Left ventricle myocardium superior (tissue), 1 donor: ENCODE measurements at regions of chr3 and their contacts with region 1.

Region 1: DNA sequence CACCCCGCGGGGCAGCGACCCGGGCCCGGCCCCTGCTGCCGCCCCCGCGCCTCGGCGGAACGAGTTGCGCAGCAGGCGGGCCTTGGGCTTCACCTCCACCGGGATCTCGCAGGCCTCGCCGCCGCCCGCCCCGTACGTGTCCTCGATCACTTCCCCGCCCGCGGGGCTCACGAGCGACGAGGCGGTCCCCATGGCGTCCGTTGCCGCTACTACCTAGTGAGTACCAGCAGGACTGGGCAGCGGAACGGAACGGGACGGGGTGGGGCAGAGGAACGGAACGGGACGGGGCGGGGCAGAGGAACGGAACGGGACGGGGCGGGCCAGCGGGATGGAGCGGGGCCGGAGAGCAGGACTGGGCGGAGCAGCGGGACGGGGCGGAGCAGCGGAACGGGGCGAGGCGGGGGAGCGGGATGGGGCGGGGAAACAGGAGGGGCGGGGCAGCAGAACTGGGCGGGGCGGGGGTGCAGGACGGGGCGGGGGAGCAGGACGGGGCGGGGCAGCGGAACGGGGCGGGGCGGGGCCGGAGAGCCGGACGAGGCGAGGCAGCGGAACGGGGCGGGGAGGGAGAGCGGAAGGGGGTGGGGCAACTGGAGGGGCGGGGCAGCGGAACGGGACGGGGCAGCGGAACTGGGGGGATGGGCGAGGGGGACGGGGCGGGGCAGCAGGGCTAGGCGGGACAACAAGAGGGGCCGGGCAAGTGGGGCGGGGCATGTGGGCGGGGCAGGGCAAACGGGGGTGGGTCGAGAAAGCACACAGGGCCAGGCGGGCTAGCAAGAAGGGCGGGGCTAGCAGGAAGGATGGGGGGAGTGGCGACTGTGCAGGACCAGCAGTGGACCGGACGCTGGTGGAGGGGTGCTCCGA is at the start of gene NPHP3:
- DNase-seq: peak; percentile 97
- ATAC-seq: peak; percentile 92
- total RNA-seq, gene NPHP3: 9.2 TPM

Region 2: GRCh38 chr3:131772269-131773026 is 949.9 kb before region 1 on chr3:
- intact Hi-C with region 1: no loop called
- DNase-seq: no peak
- ATAC-seq: no peak

Region 3: GRCh38 chr3:133424937-133425869 is 702.8 kb after region 1 on chr3:
- intact Hi-C with region 1: loop called (anchors 5 kb)
- DNase-seq: no peak
- ATAC-seq: no peak

Region 4: GRCh38 chr3:133573054-133573628 is 850.7 kb after region 1 on chr3:
- intact Hi-C with region 1: loop called (anchors 5 kb)
- DNase-seq: peak; percentile 100
- ATAC-seq: peak; percentile 94